CD4-positive, alpha-beta T cell (primary cell): ENCODE measurements at regions of chr13 and their contacts with region 1.

Region 1: GRCh38 chr13:112814905-112815585 is 125.2 kb downstream of the ATP11A start:
- DNase-seq: no peak
- ATAC-seq: no peak
- H3K4me3 ChIP-seq: no peak overlapping the region
- H3K4me3 Mint-ChIP-seq: no peak overlapping the region
- H3K27ac ChIP-seq: no peak overlapping the region
- H3K27ac Mint-ChIP-seq: no peak overlapping the region
- H3K4me1 ChIP-seq: no peaks in the 10 kb centered on the region
- H3K4me1 Mint-ChIP-seq: no peaks in the 10 kb centered on the region
- H3K27me3 ChIP-seq: no peaks in the 10 kb centered on the region
- H3K27me3 Mint-ChIP-seq: no peaks in the 10 kb centered on the region
- CTCF ChIP-seq: no peak

Region 2: DNA sequence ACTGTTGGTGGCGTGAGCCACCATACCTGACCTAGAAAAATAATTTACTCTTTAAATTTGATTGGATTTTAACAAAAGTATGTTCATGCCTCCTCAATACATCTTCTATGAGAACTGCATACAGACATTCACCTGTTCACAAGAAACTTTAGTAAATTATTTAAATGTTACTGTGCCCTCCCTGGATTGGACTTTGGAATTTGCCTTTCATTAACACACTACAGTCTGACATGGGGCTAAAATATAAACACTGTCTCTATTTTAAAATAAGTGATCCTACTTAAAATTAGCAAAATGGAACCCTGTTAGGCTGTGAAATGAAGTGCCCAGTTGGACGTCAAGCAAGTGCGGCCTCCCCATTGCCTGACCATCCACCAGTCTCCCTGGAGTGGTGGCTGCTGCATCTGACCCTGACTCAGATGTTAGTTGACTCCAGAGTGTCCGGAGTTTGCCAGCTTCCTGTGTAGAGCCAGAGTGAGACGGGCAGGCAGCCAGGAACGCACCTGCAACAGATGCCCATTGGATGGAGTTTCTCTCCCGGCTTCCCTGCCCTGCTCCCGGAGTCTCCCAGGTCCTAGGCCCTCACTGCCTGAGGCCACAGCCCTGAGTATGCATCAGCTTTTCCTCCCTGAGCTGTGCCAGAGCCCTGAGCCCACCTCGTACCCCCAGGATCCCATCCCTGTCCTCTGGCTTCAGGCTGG is 171.1 kb before region 1 on chr13:
- CTCF ChIA-PET with region 1: no interaction called
- POLR2A ChIA-PET with region 1: no interaction called
- intact Hi-C with region 1: loop called in 1 of 2 experiments (anchors 10 kb)
- DNase-seq: no peak
- ATAC-seq: no peak
- H3K4me3 ChIP-seq: no peak overlapping the region
- H3K4me3 Mint-ChIP-seq: no peak overlapping the region
- H3K27ac ChIP-seq: no peak overlapping the region
- H3K27ac Mint-ChIP-seq: no peak overlapping the region
- H3K4me1 ChIP-seq: peaks cover 15% of the 10 kb centered on the region
- H3K4me1 Mint-ChIP-seq: no peaks in the 10 kb centered on the region
- H3K27me3 ChIP-seq: peaks cover 0 to 3% of the 10 kb centered on the region in 2 experiments
- H3K27me3 Mint-ChIP-seq: peaks cover 3% of the 10 kb centered on the region
- CTCF ChIP-seq: no peak